ENCODE measurements at regions of chr18 and their contacts with region 1.

Region 1: DNA sequence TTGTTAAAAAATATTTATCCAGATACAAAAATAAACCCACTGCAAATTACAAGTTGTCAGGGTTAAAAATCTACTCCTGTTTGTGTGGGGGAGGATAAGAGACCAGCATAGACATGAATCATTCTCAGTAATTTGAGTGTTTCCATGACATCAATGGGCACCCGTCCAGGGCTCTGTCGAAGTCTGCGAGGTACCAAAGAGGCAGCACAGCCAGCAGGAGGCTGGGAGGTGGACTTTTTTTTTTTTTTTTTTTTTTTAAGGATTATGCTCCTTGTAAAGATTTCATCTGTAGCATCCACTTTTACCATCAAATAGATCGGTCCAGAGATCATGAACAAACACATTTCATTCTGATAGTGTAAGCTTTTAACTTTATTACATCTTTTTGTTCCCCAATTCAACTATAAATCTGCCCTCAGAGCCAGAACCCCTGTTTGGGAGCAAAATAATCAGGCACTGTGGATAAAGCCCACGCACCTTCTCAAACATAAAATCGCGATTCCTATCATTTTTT is 182.0 kb downstream of the TCF4 start:
- DNase-seq: peak; percentile 81 to 92
- ATAC-seq: peak; percentile 88 to 93
- H3K4me3 ChIP-seq: peak overlapping the region; percentile 50 to 58 (median 54)
- H3K27ac ChIP-seq: peak overlapping the region; percentile 80 to 85 (median 81)
- H3K4me1 ChIP-seq: peaks cover 47 to 84% of the 10 kb centered on the region in 2 donors
- H3K27me3 ChIP-seq: no peaks in the 10 kb centered on the region
- CTCF ChIP-seq: peak in 2 of 5 experiments; percentile 23 to 30
- POLR2A ChIP-seq: no peak

Region 2: GRCh38 chr18:54119524-54120019 is 1286.4 kb before region 1 on chr18:
- in situ Hi-C with region 1: no loop called
- intact Hi-C with region 1: no loop called
- DNase-seq: no peak
- ATAC-seq: peak in 1 of 2 donors; percentile 49
- H3K4me3 ChIP-seq: peak overlapping the region in 1 of 4 donors; percentile 21
- H3K27ac ChIP-seq: no peak overlapping the region
- H3K4me1 ChIP-seq: no peaks in the 10 kb centered on the region
- H3K27me3 ChIP-seq: no peaks in the 10 kb centered on the region
- CTCF ChIP-seq: peak in 4 of 5 experiments; percentile 17 to 68 (median 54)
- POLR2A ChIP-seq: no peak

Region 3: DNA sequence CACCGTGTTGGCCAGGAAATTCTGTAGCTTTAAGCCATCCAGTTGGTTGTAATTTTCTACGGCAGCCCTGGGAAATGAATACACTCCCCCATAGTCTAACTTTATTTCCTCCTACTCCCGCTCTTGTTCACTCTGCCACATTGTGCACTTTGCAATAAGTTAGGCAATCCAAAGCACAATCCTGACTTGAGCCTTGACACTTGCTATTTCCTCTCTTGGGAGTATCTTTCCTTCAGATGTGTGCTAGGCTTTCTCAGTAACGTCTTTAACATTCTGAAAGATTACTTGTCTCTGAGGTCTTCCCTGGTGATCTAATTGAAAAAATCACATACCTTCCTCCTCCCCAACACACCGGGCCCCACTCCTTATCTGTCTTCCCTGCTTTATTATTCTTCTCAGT is 643.6 kb before region 1 on chr18:
- in situ Hi-C with region 1: no loop called
- intact Hi-C with region 1: no loop called
- DNase-seq: no peak
- ATAC-seq: no peak
- H3K4me3 ChIP-seq: no peak overlapping the region
- H3K27ac ChIP-seq: no peak overlapping the region
- H3K4me1 ChIP-seq: no peaks in the 10 kb centered on the region
- H3K27me3 ChIP-seq: no peaks in the 10 kb centered on the region
- CTCF ChIP-seq: no peak
- POLR2A ChIP-seq: no peak

Region 4: GRCh38 chr18:55322178-55322735 is 83.7 kb before region 1 on chr18:
- in situ Hi-C with region 1: loop called in 3 of 4 experiments (anchors 5 to 25 kb)
- intact Hi-C with region 1: loop called (anchors 2 kb)
- DNase-seq: peak; percentile 77 to 90
- ATAC-seq: peak; percentile 88 to 90
- H3K4me3 ChIP-seq: peak overlapping the region; percentile 57 to 82 (median 73)
- H3K27ac ChIP-seq: peak overlapping the region; percentile 93 to 95 (median 94)
- H3K4me1 ChIP-seq: peaks cover 53 to 54% of the 10 kb centered on the region in 2 donors
- H3K27me3 ChIP-seq: no peaks in the 10 kb centered on the region
- CTCF ChIP-seq: peak in 2 of 5 experiments; percentile 12 to 17
- POLR2A ChIP-seq: peak; percentile 68 to 84

Region 5: GRCh38 chr18:55337908-55338521 is 67.9 kb before region 1 on chr18:
- in situ Hi-C with region 1: no loop called
- intact Hi-C with region 1: loop called (anchors 5 kb)
- DNase-seq: peak in 1 of 2 donors; percentile 48
- ATAC-seq: peak; percentile 79 to 82
- H3K4me3 ChIP-seq: peak overlapping the region; percentile 39 to 53 (median 45)
- H3K27ac ChIP-seq: peak overlapping the region; percentile 75 to 85 (median 82)
- H3K4me1 ChIP-seq: peaks cover 43 to 61% of the 10 kb centered on the region in 2 donors
- H3K27me3 ChIP-seq: no peaks in the 10 kb centered on the region
- CTCF ChIP-seq: no peak
- POLR2A ChIP-seq: peak in 1 of 2 donors; percentile 13

Region 6: DNA sequence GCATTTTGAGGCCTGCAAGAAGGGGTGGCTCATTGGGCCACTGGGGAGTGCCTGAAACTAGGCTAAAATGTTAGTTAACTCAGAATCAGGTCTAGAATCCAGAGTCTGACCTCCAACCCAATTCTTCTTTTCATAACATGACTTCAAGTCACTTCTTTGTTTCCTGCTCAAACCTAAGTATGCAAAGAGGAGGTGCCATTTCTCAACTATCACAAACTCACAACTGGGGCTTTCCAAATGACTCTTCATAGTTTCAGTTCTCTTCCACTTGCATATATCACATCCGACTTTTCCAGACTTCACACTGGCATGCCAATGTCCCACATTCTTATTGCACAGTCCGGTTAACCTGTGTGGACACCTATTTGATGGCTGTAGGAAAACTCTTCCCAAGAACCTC is 29.6 kb before region 1 on chr18:
- in situ Hi-C with region 1: no loop called
- intact Hi-C with region 1: no loop called
- DNase-seq: no peak
- ATAC-seq: no peak
- H3K4me3 ChIP-seq: no peak overlapping the region
- H3K27ac ChIP-seq: no peak overlapping the region
- H3K4me1 ChIP-seq: peaks cover 4 to 9% of the 10 kb centered on the region in 2 donors
- H3K27me3 ChIP-seq: no peaks in the 10 kb centered on the region
- CTCF ChIP-seq: no peak
- POLR2A ChIP-seq: no peak

Measured in gastrocnemius medialis (tissue), 4 donors.